PC-3 (cell line): ENCODE measurements at regions of chr1 and their contacts with region 1.

Region 1: DNA sequence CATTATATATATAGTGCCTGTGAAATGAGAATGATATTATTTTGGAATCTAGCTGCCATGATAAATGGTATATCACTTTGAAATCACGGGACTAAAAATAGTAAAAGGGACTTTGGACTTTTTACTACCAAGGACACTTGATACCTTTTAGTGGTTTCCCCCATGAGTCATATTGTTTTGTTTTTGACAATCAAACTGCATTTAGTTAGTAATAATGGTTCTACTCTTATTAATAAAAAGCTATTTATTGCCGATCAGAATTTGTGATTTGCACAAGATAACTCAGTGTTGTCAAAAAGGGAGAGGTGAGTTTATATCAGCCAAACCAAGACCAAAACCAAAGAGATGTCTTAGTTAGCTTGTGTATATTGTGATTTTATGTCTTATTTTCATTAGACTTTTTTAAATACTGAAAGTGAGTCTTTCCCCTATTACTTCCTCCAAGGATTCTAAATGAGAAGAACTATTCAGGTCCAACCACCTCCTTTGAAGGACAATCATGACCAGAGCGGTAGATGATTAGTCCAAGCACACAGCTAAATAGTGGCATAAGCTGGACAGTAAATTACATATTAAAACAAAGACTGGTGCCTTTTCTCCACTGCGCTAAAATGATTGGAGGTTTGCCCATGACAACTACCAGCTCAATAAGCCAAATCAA is 281.7 kb upstream of the ESRRG start:
- DNase-seq: peak; percentile 79
- ATAC-seq: peak; percentile 70
- H3K4me3 ChIP-seq: no peak overlapping the region
- H3K27ac ChIP-seq: peak overlapping the region; percentile 16
- H3K4me1 ChIP-seq: peaks cover 23% of the 10 kb centered on the region
- H3K27me3 ChIP-seq: no peaks in the 10 kb centered on the region
- CTCF ChIP-seq: no peak

Region 2: DNA sequence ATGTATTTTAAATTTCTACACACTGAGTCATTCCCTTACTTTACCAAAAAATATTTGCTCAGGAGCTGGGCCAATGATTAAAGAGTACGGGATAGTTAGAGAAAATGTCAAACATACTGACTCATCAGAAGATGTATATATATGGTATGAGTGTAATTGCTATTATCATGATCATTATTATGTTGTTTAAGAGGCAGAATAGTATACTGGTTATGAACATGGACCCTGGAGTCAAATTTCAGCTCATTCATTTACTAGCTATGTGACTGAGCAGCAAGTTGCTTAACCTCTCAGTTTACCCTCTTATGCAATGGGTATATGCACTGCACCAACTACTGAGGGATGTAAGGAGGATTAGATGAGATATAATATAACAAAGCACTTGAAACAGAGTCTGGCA is 540.4 kb before region 1 on chr1:
- CTCF ChIA-PET with region 1: no interaction called
- POLR2A ChIA-PET with region 1: no interaction called
- intact Hi-C with region 1: loop called (anchors 10 kb)
- DNase-seq: peak; percentile 99
- ATAC-seq: peak; percentile 97
- H3K4me3 ChIP-seq: no peak overlapping the region
- H3K27ac ChIP-seq: no peak overlapping the region
- H3K4me1 ChIP-seq: peaks cover 43% of the 10 kb centered on the region
- H3K27me3 ChIP-seq: no peaks in the 10 kb centered on the region
- CTCF ChIP-seq: no peak

Region 3: DNA sequence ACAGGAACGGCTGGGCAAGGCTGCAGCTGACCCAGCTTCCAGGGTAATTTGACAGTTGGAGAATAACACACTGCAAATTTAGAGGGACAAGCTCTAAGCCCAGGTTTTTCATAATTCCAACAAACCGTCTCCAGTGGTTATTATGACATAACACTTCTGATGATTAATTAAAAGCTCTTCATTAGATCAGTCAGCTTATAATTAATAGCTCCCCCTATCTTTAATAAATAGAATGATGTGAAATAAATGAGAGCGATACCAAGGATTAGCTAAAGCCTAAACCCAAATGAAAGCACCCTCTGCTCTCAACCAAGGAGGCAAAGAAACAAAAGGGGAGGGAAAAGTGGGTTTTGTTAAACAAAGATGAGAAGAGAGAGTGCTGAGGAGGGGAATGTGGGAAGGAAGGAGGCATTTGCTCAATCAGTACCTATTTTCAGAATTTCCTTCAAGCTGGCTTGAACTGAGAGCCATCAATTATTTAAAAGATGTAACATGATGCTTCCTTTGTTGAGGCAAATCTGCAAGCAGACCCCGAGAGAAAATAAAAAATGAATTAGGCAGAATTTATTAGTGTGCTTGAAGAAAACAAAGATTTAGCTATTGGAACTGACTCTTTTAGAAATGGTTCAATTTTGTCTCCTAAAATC is 59.9 kb before region 1 on chr1:
- CTCF ChIA-PET with region 1: no interaction called
- POLR2A ChIA-PET with region 1: interaction called, 13 read pairs
- intact Hi-C with region 1: no loop called
- DNase-seq: no peak
- ATAC-seq: no peak
- H3K4me3 ChIP-seq: no peak overlapping the region
- H3K27ac ChIP-seq: no peak overlapping the region
- H3K4me1 ChIP-seq: no peaks in the 10 kb centered on the region
- H3K27me3 ChIP-seq: no peaks in the 10 kb centered on the region
- CTCF ChIP-seq: peak; percentile 48; the same call in 1 of the 2 replicates

Region 4: DNA sequence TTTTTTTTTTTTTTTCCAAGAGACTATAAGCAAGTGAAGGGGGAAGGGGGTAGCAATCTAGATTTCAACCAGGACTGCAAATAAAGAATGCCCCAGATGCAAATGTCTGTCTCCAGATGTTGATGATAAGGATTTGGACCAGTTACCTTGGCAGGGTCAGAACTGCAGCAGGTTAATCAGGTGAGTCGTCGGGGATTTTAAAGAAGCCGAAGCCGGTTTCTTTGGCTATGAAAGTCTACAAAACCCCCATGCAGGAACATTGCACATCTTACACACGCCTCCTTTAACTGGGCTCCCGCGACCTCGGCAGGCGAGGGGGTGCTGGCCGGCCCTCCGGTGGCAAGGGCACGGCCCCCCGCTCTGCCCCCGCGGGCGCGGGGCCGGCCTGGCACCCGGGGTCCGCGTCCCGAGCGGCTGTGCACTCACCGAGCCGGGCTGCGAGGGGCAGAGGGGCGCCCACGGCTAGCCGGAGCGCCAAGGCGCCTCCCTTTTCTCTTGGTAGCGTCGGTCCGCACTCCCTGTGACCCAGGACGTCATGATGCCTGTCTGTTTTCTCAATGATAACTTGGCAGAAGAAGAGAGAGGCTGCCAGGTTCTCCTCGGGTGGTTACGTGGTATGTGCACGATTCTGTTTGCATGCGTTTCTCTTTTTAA is 84.6 kb after region 1 on chr1:
- CTCF ChIA-PET with region 1: no interaction called
- POLR2A ChIA-PET with region 1: no interaction called
- intact Hi-C with region 1: loop called (anchors 2 kb)
- DNase-seq: peak; percentile 82
- ATAC-seq: peak; percentile 90
- H3K4me3 ChIP-seq: peak overlapping the region; percentile 84
- H3K27ac ChIP-seq: peak overlapping the region; percentile 54
- H3K4me1 ChIP-seq: peaks cover 17% of the 10 kb centered on the region
- H3K27me3 ChIP-seq: no peaks in the 10 kb centered on the region
- CTCF ChIP-seq: no peak

Region 5: DNA sequence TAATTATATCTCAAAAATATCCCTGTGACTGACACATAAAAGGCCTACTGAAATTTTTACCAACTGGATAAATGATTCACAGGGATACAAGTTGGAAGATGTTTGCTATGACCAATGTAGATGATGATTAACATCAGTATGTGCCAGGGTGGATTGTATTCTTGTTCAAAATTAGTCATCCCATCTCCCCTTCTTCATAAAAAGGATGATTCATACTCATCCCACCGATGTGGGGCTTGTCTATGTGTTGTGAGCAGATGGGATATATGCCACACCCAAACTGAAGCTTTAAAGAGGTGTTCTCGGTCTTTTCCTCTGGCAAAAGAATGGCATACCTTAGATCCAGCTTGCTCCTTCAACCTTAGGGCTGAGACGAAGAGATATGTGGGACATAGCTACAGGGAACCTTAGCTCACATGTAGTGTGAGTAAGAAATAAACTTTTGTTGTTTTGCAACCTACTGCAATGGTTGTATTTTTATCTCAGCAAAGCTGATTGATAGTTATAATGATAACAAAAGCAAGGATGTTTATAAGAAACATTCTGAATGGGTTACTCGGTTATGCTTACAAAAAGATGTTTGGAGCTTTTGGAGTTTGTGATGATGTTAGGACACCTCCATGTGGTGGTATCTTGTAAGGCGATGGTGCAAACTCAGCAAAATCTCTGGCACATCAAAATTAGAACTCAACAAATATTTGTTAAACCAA is 655.6 kb after region 1 on chr1:
- CTCF ChIA-PET with region 1: no interaction called
- POLR2A ChIA-PET with region 1: no interaction called
- intact Hi-C with region 1: loop called (anchors 1 kb)
- DNase-seq: peak; percentile 98
- ATAC-seq: peak; percentile 93
- H3K4me3 ChIP-seq: peak overlapping the region; percentile 48; the same call in 1 of the 2 replicates
- H3K27ac ChIP-seq: peak overlapping the region; percentile 86
- H3K4me1 ChIP-seq: peaks cover 24% of the 10 kb centered on the region
- H3K27me3 ChIP-seq: no peaks in the 10 kb centered on the region
- CTCF ChIP-seq: peak; percentile 83